AG04450 (cell line): ENCODE measurements at regions of chr20 and their contacts with region 1.

Region 1: GRCh38 chr20:17995967-17996819 is 27.4 kb downstream of the MGME1 start:
- DNase-seq: no peak
- H3K4me3 ChIP-seq: no peak overlapping the region
- H3K27ac ChIP-seq: no peak overlapping the region
- H3K27me3 ChIP-seq: no peaks in the 10 kb centered on the region
- CTCF ChIP-seq: peak; percentile 99

Region 2: GRCh38 chr20:17968366-17969279 is 27.6 kb before region 1 on chr20 and contains the starts of genes MGME1 and SNX5:
- CTCF ChIA-PET with region 1: interaction called, 10 read pairs
- POLR2A ChIA-PET with region 1: no interaction called
- DNase-seq: peak; percentile 98
- H3K4me3 ChIP-seq: peak within 1 kb of the TSS; percentile 96
- H3K27ac ChIP-seq: peak within 1 kb of the TSS; percentile 100
- H3K27me3 ChIP-seq: no peaks in the 10 kb centered on the region
- CTCF ChIP-seq: no peak
- polyA plus RNA-seq, gene MGME1: 9.9 and 13.5 TPM in 2 replicates
- polyA plus RNA-seq, gene SNX5: 109 and 150 TPM in 2 replicates

Region 3: DNA sequence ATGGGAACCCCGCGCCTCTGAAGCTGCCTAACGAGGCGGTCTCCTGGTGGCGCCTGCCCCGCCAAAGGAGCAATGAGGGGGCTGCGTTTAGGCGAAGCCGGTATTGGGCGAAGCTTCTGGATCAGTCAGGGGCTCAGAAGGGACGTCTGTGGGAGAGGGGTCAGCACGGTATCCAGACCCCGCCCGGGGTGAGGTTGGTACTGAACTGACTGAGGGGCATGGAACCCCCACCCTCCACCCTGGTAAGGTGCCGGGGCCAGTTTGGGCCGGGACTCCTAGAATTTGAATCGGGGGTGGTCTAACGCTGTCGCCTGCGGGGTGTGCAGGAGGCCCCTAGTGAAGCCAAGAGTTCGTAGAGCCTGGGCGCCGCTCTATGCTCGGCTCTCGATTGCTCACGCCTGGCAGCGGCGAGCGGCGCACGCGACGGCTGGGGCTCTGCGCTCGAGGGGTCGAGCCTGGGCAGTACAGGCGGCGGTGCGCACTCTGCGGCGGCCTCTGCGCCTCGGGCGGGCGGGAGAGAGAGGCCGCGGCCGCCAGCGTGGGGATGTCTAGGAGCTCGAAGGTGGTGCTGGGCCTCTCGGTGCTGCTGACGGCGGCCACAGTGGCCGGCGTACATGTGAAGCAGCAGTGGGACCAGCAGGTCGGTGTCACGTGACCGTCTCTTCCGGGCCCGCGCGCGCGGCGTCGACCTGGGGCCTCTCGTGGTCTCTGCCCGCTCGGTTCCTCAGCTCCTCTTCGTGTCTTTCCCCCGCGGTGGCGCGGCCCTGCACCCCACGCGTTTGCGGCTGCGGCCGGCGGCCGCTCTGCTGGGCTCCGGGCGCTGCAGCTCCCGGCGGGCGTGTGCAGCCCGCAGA is 141.4 kb after region 1 on chr20 and contains the starts of genes KAT14 and PET117:
- CTCF ChIA-PET with region 1: no interaction called
- POLR2A ChIA-PET with region 1: no interaction called
- DNase-seq: peak; percentile 84
- H3K4me3 ChIP-seq: peak within 1 kb of the TSS; percentile 89
- H3K27ac ChIP-seq: peak within 1 kb of the TSS; percentile 57
- H3K27me3 ChIP-seq: peaks cover 6% of the 10 kb centered on the region
- CTCF ChIP-seq: 0 out of 2 replicates have a peak, but pooled peaks have one; percentile 5
- polyA plus RNA-seq, gene KAT14: 9.6 and 12.2 TPM in 2 replicates
- polyA plus RNA-seq, gene PET117: 9.5 and 12.1 TPM in 2 replicates